ENCODE measurements at regions of chr3 and their contacts with region 1.

Region 1: GRCh38 chr3:47420511-47421484 is 40.0 kb downstream of the PTPN23 start:
- DNase-seq: peak; percentile 77
- H3K4me3 ChIP-seq: no peak overlapping the region
- H3K27ac ChIP-seq: no peak overlapping the region
- H3K4me1 ChIP-seq: no peaks in the 10 kb centered on the region
- H3K27me3 ChIP-seq: no peaks in the 10 kb centered on the region
- CTCF ChIP-seq: peak; percentile 94 to 96

Region 2: DNA sequence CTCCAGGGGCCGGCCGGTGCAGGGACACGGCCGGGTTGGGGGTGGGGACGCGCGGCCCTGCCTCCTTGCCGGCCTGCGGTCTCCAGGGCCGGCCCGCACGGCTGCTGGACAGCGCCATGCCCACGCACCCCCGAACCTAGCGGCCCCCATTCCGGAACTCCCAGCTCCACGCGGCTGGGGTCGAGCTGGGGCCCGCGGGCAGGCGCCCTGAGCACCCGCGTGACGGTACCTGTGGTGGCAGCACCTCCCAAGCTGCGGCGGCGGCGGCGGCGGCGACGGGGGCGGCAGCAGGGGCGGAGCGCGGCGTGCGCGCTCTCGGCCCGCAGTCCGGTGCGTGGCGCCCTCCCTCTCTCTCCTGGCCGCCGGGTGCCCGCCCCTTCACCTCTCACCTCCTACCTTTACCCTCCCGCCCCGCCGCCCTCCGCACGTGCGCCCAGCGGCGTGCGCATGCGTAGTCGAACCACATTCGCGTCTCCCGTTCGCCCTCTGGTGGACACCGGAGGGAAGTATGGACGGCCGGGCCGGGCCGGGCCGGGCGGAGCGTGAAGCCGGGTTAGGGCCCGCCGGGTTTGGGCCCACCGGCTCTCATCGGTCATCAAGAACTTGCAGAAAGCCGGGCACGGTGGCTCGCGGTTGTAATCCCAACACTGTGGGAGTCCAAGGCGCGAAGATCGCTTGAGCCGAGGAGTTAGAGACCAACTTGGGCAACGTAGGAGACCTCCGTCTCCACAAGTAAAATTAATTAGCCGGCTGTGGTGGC is 55.0 kb after region 1 on chr3 and contains the start of gene SCAP:
- CTCF ChIA-PET with region 1: interaction called, 6 read pairs
- dilution Hi-C with region 1: no loop called
- in situ Hi-C with region 1: loop called (anchors 10 kb)
- intact Hi-C with region 1: loop called (anchors 1 kb)
- DNase-seq: peak; percentile 79
- H3K4me3 ChIP-seq: peak within 1 kb of the TSS; percentile 89 to 99 (median 94)
- H3K27ac ChIP-seq: peak within 1 kb of the TSS; percentile 55
- H3K4me1 ChIP-seq: peaks cover 5% of the 10 kb centered on the region
- H3K27me3 ChIP-seq: no peaks in the 10 kb centered on the region
- CTCF ChIP-seq: peak; percentile 59 to 87
- total RNA-seq, gene SCAP: 72.5 to 75.4 TPM

Region 3: DNA sequence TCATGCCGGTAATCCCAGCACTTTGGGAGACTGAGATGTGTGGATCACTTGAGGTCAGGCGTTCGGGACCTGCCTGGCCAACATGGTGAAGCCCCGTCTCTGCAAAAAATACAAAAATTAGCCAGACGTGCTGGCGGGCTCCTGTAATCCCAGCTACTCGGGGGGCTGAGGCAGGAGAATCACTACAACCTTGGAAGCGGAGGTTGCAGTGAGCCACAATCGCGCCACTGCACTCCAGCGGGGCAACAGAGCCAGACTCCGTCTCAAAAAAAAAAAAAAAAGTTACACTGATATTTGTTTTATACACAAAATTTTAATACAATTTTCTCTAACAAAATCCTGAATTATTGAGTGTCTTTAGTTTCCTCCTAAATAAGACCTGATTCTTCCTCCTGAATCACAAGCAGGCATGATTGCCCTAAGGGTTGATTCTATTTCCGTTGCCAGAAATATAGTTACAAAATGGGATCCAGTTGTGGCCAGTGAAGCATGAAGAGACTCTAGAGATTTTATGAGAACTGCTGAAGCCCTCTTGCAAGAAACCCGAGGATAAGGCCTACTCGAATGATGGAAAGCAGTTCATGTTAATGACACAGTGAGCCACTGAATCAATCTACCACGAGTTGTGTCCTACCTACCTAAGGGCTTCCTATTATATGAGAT is 370.5 kb after region 1 on chr3:
- CTCF ChIA-PET with region 1: no interaction called
- dilution Hi-C with region 1: no loop called
- in situ Hi-C with region 1: no loop called
- intact Hi-C with region 1: loop called (anchors 1 kb)
- DNase-seq: no peak
- H3K4me3 ChIP-seq: no peak overlapping the region
- H3K27ac ChIP-seq: no peak overlapping the region
- H3K4me1 ChIP-seq: no peaks in the 10 kb centered on the region
- H3K27me3 ChIP-seq: no peaks in the 10 kb centered on the region
- CTCF ChIP-seq: no peak

Measured in mammary epithelial cell (primary cell).